ENCODE measurements at regions of chr15 and their contacts with region 1.

Region 1: GRCh38 chr15:57866149-57866736 is 159.7 kb downstream of the POLR2M start:
- DNase-seq: no peak
- ATAC-seq: peak; percentile 81
- H3K4me3 ChIP-seq: no peak overlapping the region
- H3K27ac ChIP-seq: no peak overlapping the region
- H3K4me1 ChIP-seq: no peaks in the 10 kb centered on the region
- H3K27me3 ChIP-seq: peaks cover 7% of the 10 kb centered on the region
- CTCF ChIP-seq: peak; percentile 89

Region 2: DNA sequence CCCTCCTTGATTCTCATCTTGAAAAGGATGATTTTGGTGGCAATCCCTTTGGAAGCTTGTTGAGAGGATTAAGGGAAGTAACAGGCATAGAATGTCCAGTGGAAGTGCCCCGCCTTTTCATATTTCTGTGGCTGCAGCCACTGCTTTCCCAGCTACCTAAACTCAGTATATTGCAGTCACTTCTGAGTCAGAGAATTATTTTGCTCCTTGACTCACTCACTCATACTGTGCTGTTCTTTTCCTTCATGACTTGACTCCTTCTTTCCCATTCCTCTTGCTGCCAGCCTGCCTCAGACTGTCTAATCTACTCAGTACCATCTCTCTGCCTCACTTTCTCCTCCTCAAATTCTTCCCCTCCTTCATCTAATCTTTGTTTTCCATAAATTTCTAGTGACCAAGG is 186.2 kb before region 1 on chr15:
- CTCF ChIA-PET with region 1: no interaction called
- POLR2A ChIA-PET with region 1: no interaction called
- in situ Hi-C with region 1: loop called (anchors 25 kb)
- intact Hi-C with region 1: no loop called
- DNase-seq: peak; percentile 15
- ATAC-seq: peak; percentile 53; the same call in 1 of the 2 replicates
- H3K4me3 ChIP-seq: no peak overlapping the region
- H3K27ac ChIP-seq: no peak overlapping the region
- H3K4me1 ChIP-seq: peaks cover 3% of the 10 kb centered on the region; the same call in 1 of the 2 replicates
- H3K27me3 ChIP-seq: no peaks in the 10 kb centered on the region
- CTCF ChIP-seq: no peak

Region 3: DNA sequence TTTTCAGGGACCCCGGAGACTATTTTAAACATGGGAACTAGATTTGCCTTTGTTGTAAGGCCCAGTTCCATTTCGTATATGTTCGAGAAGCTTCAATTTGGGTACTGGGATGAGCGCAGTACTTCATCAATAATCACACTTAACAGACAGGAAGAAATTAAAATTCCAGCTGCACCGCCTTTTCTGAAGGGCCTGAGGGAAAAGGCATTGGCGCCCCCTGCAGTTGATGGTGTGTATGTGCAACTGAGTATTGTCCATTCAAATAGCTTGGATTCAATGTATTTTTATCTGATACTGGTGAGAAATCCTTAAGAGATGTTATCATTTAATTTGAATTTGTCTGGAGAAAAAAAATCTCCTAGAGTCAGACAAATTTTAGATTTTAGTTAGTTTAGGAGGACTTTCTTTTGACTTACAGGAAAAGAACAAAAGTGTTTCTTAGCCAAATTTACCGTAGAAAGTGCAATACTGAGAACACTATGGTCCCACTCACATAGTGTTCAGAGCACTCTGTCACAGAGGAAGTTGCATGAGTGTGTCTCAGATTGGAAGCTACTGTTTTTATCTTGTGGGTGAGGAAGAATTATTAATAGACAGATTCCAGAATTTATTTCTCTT is 204.7 kb after region 1 on chr15:
- CTCF ChIA-PET with region 1: interaction called, 11 read pairs
- POLR2A ChIA-PET with region 1: no interaction called
- in situ Hi-C with region 1: no loop called
- intact Hi-C with region 1: loop called (anchors 2 kb)
- DNase-seq: peak; percentile 24
- ATAC-seq: no peak; the same call in 1 of the 2 replicates
- H3K4me3 ChIP-seq: no peak overlapping the region
- H3K27ac ChIP-seq: no peak overlapping the region
- H3K4me1 ChIP-seq: no peaks in the 10 kb centered on the region
- H3K27me3 ChIP-seq: peaks cover 17% of the 10 kb centered on the region
- CTCF ChIP-seq: peak; percentile 94

Region 4: GRCh38 chr15:58212909-58213526 is 346.8 kb after region 1 on chr15:
- CTCF ChIA-PET with region 1: interaction called, 14 read pairs
- POLR2A ChIA-PET with region 1: no interaction called
- in situ Hi-C with region 1: no loop called
- intact Hi-C with region 1: no loop called
- DNase-seq: no peak
- ATAC-seq: peak; percentile 89
- H3K4me3 ChIP-seq: no peak overlapping the region
- H3K27ac ChIP-seq: no peak overlapping the region
- H3K4me1 ChIP-seq: no peaks in the 10 kb centered on the region
- H3K27me3 ChIP-seq: no peaks in the 10 kb centered on the region
- CTCF ChIP-seq: peak; percentile 78